Posterior cingulate gyrus (tissue), 11 donors: ENCODE measurements at regions of chr17 and their contacts with region 1.

Region 1: DNA sequence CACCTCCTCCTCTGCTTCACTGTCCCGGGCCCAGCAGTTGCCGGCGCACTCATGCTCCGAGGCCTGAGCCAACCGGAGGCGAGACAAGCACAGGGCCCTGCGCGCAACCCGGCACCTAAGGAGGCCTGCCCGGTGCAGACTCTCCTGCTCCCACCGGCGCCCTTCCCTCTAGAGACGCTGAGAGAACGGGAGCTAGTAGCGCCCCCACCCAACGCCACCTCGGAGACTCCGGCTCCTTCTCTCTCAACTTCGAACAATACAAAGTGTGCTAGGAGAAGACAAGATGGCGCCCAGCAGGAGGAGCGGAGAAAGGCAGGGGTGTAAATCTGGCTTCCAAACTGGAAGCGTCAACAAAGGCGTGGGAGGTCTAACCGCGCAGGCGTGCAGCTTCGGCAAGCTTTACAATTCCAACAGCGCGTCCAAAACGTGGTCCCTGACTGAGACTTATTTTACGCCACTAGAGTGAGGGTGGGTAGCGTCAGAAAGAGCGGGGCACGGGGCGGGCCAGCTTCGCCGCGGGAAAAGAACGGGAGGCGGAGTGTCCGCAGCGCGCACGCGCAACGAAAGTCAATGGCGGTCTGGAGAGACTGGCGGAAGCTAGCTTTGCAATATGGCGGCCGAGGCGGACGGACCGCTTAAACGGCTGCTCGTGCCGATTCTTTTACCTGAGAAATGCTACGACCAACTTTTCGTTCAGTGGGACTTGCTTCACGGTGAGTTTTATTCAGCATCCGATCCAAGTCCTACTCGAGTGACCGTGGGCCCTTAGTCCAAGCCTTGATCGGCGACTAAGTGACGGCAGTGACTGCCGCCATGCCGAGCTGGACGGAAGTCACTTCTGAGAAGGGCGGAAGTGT is at the start of gene MPDU1:
- DNase-seq: peak; percentile 93 to 99 (median 95)

Region 2: GRCh38 chr17:7435221-7435675 is 148.2 kb before region 1 on chr17 and contains the start of gene TMEM102:
- intact Hi-C with region 1: loop called (anchors 10 kb)
- DNase-seq: peak; percentile 77 to 98 (median 84)

Region 3: DNA sequence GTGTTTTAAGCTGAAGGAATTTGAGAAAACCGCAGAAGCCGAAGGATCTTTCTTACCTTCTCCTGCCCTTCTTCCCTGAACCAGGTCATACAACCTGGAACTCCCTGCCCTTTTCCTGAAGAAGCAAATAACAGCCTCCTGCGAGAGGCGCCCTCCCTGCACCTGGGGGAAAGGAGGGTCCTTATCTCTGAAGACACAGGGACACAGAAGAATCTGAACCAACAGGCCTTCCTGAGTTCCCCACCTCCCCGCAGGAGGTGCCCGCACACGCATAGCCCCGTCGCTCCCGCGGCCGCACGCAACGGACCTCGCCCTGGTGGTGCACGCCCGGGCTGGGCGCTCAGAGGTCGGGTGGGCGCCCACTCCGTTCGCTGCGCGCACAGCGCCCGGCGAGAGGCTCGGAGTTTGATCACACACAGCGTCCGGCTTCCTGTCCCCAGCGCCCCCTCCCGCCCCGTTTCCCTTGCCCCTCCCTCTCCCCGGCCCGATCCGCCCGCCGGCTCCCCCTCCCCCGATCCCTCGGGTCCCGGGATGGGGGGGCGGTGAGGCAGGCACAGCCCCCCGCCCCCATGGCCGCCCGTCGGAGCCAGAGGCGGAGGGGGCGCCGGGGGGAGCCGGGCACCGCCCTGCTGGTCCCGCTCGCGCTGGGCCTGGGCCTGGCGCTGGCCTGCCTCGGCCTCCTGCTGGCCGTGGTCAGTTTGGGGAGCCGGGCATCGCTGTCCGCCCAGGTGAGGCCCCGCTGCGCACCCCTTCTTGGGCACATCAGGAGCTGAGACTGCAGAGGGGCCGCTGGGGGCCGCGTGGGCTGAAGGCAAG is 34.7 kb before region 1 on chr17 and contains the start of gene TNFSF12:
- intact Hi-C with region 1: no loop called
- DNase-seq: peak in 9 of 10 donors; percentile 39 to 90 (median 61)

Region 4: DNA sequence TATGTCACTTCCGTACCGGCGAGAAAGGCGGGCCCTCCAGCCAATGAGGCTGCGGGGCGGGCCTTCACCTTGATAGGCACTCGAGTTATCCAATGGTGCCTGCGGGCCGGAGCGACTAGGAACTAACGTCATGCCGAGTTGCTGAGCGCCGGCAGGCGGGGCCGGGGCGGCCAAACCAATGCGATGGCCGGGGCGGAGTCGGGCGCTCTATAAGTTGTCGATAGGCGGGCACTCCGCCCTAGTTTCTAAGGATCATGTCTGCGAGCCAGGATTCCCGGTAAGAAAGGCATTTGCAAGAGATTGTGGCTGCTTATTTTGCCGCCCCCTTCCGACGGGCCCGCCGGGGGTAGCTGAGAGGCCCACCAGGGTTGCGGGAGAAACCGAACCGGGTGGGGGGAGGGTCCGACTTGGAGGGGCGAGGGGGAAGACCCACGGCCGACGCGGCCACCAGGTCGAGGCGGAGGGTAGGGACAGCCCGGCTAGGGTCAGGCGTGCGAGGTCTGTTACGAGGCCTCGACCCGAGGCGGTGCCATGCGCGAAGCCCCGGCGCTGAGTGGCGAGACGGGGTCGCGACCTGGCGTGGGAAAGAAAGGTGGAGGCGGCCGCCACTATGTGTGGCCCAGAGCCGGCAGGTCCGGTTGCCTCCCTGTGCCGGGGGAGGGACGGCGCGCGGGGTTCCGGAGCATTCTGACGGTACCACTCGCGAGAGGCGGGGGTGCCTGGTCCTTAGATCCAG is 10.7 kb before region 1 on chr17:
- intact Hi-C with region 1: loop called (anchors 1 kb)
- DNase-seq: peak in 9 of 10 donors; percentile 99 to 100 (median 100)

Region 5: DNA sequence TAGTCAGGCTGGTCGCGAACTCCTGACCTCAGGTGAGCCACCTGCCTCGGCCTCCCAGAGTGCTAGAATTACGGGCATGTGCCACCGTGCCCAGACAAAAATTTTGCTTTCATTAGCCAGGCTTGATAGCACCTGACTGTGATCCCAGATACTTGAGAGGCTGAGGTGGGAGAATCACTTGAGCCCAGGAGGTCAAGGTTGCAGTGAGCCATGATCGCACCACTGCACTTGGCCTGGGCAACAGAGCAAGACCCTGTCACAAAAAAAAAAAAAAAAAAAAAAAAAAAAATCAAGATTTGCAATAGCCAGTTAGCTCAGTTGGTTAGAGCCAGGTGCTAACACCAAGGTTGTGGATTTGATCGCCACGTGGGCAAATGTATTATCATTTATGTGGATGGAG is 37.4 kb after region 1 on chr17:
- intact Hi-C with region 1: no loop called
- DNase-seq: peak in 1 of 10 donors; percentile 49

Region 6: DNA sequence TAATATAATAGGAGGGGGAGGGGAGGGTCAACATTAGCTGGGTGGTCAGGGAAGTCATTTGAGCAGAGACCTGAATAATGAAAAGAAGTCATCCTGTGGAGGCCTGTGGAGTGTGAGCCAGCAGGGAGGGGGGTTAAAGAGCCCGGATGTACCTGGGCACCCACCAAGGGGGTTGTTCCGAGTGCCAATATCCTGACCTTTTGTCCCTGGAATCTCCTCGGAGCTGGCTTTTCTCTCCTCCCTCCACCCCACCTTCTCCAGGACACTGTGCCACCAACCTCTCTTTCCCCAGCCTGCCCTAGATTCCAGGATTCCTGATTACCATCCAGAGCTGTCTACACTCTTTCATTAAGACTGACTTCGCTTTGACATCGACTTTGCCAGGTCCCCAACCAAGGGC is 52.7 kb after region 1 on chr17:
- intact Hi-C with region 1: no loop called
- DNase-seq: no peak